ENCODE measurements at regions of chr10 and their contacts with region 1.

Region 1: DNA sequence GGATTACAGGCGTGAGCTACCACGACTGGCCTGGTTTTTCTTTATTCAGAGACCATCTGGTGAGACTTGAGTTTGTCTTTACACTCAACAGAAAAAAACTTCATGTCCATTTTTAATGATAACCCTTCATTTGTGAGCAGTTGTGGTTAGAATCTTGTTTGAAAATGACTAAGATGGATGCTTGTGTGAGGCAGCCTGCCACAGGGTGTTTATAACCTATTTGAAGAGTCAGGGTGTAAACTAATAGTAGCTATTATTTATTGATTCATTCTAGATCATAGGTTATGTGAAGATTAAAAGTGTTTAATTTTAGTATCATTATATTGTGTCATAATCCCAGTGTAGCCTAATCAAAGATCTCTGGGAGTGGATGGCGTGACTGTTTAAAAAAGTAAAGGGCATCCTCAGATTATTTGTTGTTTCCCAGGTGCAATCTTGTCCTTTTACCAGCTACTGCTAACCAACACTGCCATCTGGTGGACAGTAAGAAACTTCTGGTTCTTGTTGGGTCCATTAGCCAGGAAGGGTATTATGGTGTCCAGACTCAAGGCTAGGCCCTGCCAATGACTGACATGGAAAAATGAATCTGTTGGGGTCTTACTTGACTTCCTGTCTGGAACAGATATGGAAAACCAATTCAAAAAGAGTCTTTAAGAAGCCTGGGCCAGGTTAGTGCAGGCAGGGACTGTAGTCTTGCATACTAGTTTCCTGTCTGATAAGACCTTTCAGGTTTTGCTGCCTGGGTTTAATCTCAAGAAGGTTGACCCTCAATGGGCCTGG is 24.9 kb downstream of the NRBF2 start:
- DNase-seq: peak; percentile 49
- ATAC-seq: peak; percentile 89
- H3K4me3 ChIP-seq: no peak overlapping the region
- H3K27ac ChIP-seq: 0 out of 2 replicates have a peak overlapping the region, but pooled peaks have one; percentile 31
- H3K4me1 ChIP-seq: peaks cover 3% of the 10 kb centered on the region; the same call in 1 of the 2 replicates
- H3K27me3 ChIP-seq: no peaks in the 10 kb centered on the region
- CTCF ChIP-seq: peak; percentile 70 to 86 (median 74); a peak in 5 of 6 replicates
- EP300 ChIP-seq: no peak
- POLR2A ChIP-seq: no peak
- RAD21 ChIP-seq: peak; percentile 97

Region 2: DNA sequence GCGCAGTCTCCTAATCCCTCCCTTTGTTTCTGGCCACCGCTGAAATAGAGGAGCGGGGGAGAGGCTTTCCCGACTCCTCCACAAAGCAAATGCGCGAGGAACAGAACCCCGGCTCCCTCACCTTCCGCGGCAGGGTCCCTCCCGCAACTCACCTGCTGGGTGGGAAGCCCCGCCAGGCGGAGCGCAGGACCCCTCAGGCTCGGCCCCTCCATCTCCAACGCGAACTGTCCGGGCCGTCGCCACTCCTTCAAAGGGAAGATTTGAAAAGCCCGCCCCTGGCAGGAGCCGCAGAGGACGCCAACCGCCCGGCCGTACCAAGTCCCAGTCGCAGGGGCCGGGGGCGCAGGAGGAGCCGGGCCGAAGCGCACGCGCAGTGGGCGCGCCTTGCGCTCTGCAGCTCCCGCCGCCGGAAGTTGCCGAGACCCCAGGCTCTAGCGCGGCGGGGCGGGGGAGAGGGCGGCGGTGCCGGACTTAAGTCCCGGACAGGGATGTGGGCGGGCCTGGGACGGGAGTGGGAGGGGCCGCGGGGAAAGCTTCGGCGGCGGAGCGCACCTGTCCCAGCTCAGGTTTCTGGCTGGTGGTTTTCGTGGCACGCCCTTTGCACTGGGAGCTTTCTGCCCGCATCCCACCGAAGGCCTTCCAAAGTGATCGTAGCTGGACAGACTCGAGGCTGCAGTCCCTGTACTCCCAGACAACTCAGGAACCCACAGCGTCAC is 889.5 kb before region 1 on chr10 and contains the start of gene RTKN2:
- CTCF ChIA-PET with region 1: interaction called, 3 read pairs
- POLR2A ChIA-PET with region 1: no interaction called
- RAD21 ChIA-PET with region 1: no interaction called
- SMC1A ChIA-PET with region 1: interaction called, 3 read pairs
- in situ Hi-C with region 1: no loop called
- intact Hi-C with region 1: loop called (anchors 10 kb)
- DNase-seq: no peak
- ATAC-seq: peak; percentile 85
- H3K4me3 ChIP-seq: peak within 1 kb of the TSS; percentile 74
- H3K27ac ChIP-seq: no peak within 1 kb of the TSS
- H3K4me1 ChIP-seq: no peaks in the 10 kb centered on the region
- H3K27me3 ChIP-seq: peaks cover 10 to 13% of the 10 kb centered on the region in 2 experiments
- CTCF ChIP-seq: no peak
- EP300 ChIP-seq: no peak
- POLR2A ChIP-seq: no peak; the same call in 1 of the 2 replicates
- RAD21 ChIP-seq: no peak
- polyA plus RNA-seq, gene RTKN2: not detected

Region 3: DNA sequence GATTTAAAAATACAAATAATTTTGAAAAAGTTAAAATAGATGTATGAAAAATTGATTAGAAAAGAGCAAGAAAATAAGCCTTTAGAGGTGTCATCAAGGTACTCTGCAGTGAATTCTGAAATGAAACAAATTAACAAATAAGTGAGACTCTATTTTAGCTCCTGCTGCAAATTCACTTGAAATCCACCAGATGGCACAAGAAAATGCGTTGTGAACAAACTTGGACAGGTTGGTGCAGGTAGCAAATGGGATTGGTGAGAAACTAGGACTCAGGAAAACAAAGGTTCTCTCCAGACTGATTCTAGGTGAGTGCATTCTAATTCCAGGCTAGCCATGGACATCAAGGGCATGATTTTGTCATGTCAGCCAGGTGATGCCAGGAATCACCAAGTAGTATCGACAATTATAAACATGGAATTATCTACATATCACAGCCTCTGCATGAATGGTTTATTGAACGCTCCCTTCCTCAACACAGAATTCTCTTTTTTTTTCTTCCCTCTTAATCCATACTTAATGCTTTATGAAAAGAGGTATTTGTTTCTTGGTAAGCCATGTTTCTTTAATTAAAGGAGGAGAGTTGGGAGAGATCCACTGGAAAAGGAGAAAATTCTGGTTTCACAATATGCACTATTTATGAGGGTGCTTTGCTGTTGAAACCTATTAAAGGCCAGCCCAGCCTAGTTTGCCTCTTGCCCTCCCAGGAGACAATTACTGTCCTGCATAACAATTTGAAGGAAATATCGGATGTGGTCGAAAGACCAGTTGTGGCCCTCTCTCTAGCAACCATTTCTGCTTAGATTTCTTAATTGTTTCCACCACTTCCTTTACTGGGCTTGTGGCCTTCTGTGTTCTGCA is 665.8 kb before region 1 on chr10:
- CTCF ChIA-PET with region 1: interaction called, 9 read pairs
- POLR2A ChIA-PET with region 1: no interaction called
- RAD21 ChIA-PET with region 1: interaction called, 10 read pairs
- SMC1A ChIA-PET with region 1: interaction called, 7 read pairs
- in situ Hi-C with region 1: no loop called
- intact Hi-C with region 1: loop called (anchors 1 kb)
- DNase-seq: peak; percentile 25
- ATAC-seq: peak; percentile 75
- H3K4me3 ChIP-seq: no peak overlapping the region
- H3K27ac ChIP-seq: no peak overlapping the region
- H3K4me1 ChIP-seq: no peaks in the 10 kb centered on the region
- H3K27me3 ChIP-seq: no peaks in the 10 kb centered on the region; a peak in 1 of 4 replicates
- CTCF ChIP-seq: peak; percentile 56 to 71 (median 71); a peak in 5 of 6 replicates
- EP300 ChIP-seq: no peak
- POLR2A ChIP-seq: no peak
- RAD21 ChIP-seq: peak; percentile 94

Region 4: DNA sequence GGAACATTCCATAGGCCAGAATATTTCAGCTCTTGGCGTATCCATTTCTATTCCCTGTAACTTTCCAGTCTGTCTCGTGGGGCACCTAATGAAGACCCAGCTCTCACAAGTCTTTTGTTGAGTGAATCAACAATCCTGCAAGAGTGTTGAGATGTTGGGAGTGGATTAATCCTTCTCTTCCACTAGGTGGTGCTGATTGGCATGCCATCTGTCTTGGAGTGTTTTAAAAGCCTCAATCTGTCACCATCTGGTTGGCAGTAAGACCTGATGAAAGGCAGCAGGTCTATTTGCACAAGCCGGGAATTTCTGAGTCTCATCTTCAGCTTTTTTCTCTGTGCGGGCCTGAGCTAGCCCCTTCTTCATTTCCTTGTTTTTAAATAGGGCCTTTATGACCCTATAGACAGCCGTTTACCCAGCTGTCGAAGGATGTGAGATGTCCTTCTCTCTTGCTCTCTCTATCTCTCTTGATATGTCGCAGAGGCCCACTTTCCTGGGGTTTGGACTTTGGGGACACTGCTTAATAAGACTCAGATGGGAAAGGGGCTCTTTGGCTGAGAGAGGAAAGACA is 603.3 kb before region 1 on chr10:
- CTCF ChIA-PET with region 1: interaction called, 8 read pairs
- POLR2A ChIA-PET with region 1: no interaction called
- RAD21 ChIA-PET with region 1: interaction called, 4 read pairs
- SMC1A ChIA-PET with region 1: interaction called, 6 read pairs
- in situ Hi-C with region 1: no loop called
- intact Hi-C with region 1: loop called (anchors 2 kb)
- DNase-seq: no peak
- ATAC-seq: peak; percentile 93
- H3K4me3 ChIP-seq: no peak overlapping the region
- H3K27ac ChIP-seq: no peak overlapping the region
- H3K4me1 ChIP-seq: no peaks in the 10 kb centered on the region
- H3K27me3 ChIP-seq: peaks cover 2 to 4% of the 10 kb centered on the region in 2 experiments; a peak in 2 of 4 replicates
- CTCF ChIP-seq: peak; percentile 63 to 68 (median 63); a peak in 5 of 6 replicates
- EP300 ChIP-seq: no peak
- POLR2A ChIP-seq: no peak
- RAD21 ChIP-seq: peak; percentile 85

Region 5: DNA sequence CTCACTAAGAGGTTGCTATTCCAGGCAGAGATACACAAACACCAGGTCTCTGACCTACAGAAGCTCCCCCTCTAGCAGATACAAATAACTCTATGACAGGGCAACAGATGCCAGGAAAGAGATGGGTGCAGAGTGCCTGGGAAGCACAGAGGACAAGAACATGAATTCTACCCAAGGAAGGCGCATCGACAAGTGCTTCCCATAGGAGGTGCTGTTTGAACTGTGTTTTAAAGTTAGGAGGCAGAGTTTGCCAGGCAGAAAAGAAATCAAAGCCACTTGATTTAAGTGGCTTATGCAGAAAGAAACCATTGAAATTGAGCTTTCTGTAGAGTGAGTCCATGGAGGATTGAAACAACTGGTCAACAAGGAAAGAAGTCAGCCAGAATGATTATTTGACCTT is 306.6 kb before region 1 on chr10:
- CTCF ChIA-PET with region 1: interaction called, 4 read pairs
- POLR2A ChIA-PET with region 1: no interaction called
- RAD21 ChIA-PET with region 1: interaction called, 4 read pairs
- SMC1A ChIA-PET with region 1: interaction called, 4 read pairs
- in situ Hi-C with region 1: no loop called
- intact Hi-C with region 1: loop called (anchors 10 kb)
- DNase-seq: no peak
- ATAC-seq: no peak
- H3K4me3 ChIP-seq: no peak overlapping the region
- H3K27ac ChIP-seq: no peak overlapping the region
- H3K4me1 ChIP-seq: peaks cover 37% of the 10 kb centered on the region
- H3K27me3 ChIP-seq: no peaks in the 10 kb centered on the region
- CTCF ChIP-seq: peak; percentile 7 to 38 (median 27); a peak in 3 of 6 replicates
- EP300 ChIP-seq: no peak
- POLR2A ChIP-seq: no peak
- RAD21 ChIP-seq: peak; percentile 54

Region 6: DNA sequence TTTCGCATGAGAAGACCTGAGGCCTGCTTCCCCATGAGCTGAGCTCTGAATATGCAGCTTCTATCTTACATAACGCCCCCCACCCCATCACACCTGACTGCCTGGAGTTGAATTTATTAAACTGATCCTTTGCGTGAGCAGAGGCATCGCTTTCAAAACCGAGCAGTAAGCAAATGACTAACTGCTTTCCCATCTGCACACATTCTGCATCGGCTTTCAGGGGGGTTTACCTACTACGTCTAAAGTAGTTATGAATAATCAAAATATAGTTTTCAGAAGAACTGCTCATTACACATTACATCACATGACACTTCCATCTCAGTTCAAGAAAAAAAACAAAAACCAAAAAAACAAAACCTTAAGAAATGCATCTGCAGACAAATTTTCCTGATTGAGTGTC is 287.2 kb before region 1 on chr10:
- CTCF ChIA-PET with region 1: no interaction called
- POLR2A ChIA-PET with region 1: no interaction called
- RAD21 ChIA-PET with region 1: no interaction called
- SMC1A ChIA-PET with region 1: no interaction called
- in situ Hi-C with region 1: no loop called
- intact Hi-C with region 1: no loop called
- DNase-seq: no peak
- ATAC-seq: peak; percentile 97
- H3K4me3 ChIP-seq: no peak overlapping the region
- H3K27ac ChIP-seq: no peak overlapping the region
- H3K4me1 ChIP-seq: peaks cover 5% of the 10 kb centered on the region; the same call in 1 of the 2 replicates
- H3K27me3 ChIP-seq: no peaks in the 10 kb centered on the region
- CTCF ChIP-seq: no peak
- EP300 ChIP-seq: peak; percentile 93 to 96; a peak in 3 of 4 replicates
- POLR2A ChIP-seq: no peak
- RAD21 ChIP-seq: 0 out of 2 replicates have a peak, but pooled peaks have one; percentile 12

Region 7: DNA sequence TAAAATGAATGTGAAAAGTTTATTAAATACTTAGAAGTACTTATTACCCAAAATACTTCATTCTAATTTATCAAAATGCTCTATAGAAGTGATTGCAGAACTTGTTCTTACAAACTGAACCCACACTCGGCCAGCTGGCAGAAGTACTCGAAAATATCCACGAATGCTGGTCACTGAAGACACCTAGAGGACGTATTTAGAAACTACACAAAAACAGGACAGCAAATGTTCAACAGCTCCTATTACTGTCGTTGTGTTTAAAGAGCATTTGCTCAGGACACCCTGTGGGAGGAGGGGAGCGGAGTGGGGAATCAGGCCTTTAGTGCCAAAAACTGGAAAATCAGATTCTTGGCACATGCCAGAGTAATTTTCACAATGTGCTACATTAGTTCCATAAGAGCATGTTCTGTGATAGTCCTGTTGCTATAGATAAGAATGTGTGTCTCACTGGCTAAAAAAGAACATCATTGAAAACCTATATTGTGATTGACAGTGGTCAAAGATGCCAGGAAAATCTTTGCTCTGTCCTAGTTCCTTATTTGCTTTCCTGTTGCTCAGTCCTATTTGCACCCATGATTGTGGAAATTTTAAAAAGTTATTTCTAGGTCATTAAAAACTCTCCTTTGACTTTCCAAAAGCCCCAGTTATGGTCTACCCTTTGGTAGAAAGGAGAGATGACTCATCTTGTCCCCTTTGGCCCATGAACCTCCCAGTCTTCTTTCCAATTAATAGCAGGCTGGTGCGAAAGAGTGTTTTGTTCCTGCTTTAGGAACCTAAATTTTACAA is 73.9 kb before region 1 on chr10:
- CTCF ChIA-PET with region 1: interaction called, 37 read pairs
- POLR2A ChIA-PET with region 1: interaction called, 4 read pairs
- RAD21 ChIA-PET with region 1: interaction called, 26 read pairs
- SMC1A ChIA-PET with region 1: interaction called, 72 read pairs
- in situ Hi-C with region 1: no loop called
- intact Hi-C with region 1: loop called (anchors 2 kb)
- DNase-seq: peak; percentile 38
- ATAC-seq: peak; percentile 94
- H3K4me3 ChIP-seq: no peak overlapping the region
- H3K27ac ChIP-seq: no peak overlapping the region
- H3K4me1 ChIP-seq: no peaks in the 10 kb centered on the region
- H3K27me3 ChIP-seq: no peaks in the 10 kb centered on the region; a peak in 1 of 4 replicates
- CTCF ChIP-seq: peak; percentile 63 to 84 (median 76)
- EP300 ChIP-seq: no peak
- POLR2A ChIP-seq: no peak
- RAD21 ChIP-seq: peak; percentile 99

Region 8: GRCh38 chr10:63140077-63140476 is 18.0 kb before region 1 on chr10:
- CTCF ChIA-PET with region 1: interaction called, 71 read pairs
- POLR2A ChIA-PET with region 1: interaction called, 4 read pairs
- RAD21 ChIA-PET with region 1: interaction called, 24 read pairs
- SMC1A ChIA-PET with region 1: interaction called, 53 read pairs
- in situ Hi-C with region 1: no loop called
- intact Hi-C with region 1: no loop called
- DNase-seq: no peak
- ATAC-seq: no peak
- H3K4me3 ChIP-seq: no peak overlapping the region
- H3K27ac ChIP-seq: no peak overlapping the region
- H3K4me1 ChIP-seq: peaks cover 5% of the 10 kb centered on the region
- H3K27me3 ChIP-seq: no peaks in the 10 kb centered on the region
- CTCF ChIP-seq: no peak
- EP300 ChIP-seq: no peak
- POLR2A ChIP-seq: no peak
- RAD21 ChIP-seq: no peak

Region 9: GRCh38 chr10:63465293-63466143 is 307.5 kb after region 1 on chr10 and contains the start of gene JMJD1C:
- CTCF ChIA-PET with region 1: no interaction called
- POLR2A ChIA-PET with region 1: no interaction called
- RAD21 ChIA-PET with region 1: no interaction called
- SMC1A ChIA-PET with region 1: no interaction called
- in situ Hi-C with region 1: no loop called
- intact Hi-C with region 1: no loop called
- DNase-seq: no peak
- ATAC-seq: peak; percentile 85
- H3K4me3 ChIP-seq: peak within 1 kb of the TSS; percentile 87
- H3K27ac ChIP-seq: peak within 1 kb of the TSS; percentile 77
- H3K4me1 ChIP-seq: peaks cover 3% of the 10 kb centered on the region; the same call in 1 of the 2 replicates
- H3K27me3 ChIP-seq: no peaks in the 10 kb centered on the region
- CTCF ChIP-seq: 0 out of 6 replicates have a peak, but pooled peaks of 1 of the 3 experiments have one; percentile 9
- EP300 ChIP-seq: no peak
- POLR2A ChIP-seq: peak; percentile 91
- RAD21 ChIP-seq: 0 out of 2 replicates have a peak, but pooled peaks have one; percentile 20
- polyA plus RNA-seq, gene JMJD1C: 31.2 to 42.6 TPM